Activated CD8-positive, alpha-beta T cell treated with anti-CD3 and anti-CD28 coated beads for 36 hours (primary cell): ENCODE measurements at regions of chr10 and their contacts with region 1.

Region 1: GRCh38 chr10:90879062-90879461 is 7.3 kb downstream of the RPP30 start:
- DNase-seq: no peak
- ATAC-seq: no peak
- H3K4me3 Mint-ChIP-seq: no peak overlapping the region
- H3K27ac Mint-ChIP-seq: no peak overlapping the region
- H3K4me1 Mint-ChIP-seq: peaks cover 6% of the 10 kb centered on the region
- H3K27me3 Mint-ChIP-seq: no peaks in the 10 kb centered on the region
- CTCF ChIP-seq: no peak

Region 2: DNA sequence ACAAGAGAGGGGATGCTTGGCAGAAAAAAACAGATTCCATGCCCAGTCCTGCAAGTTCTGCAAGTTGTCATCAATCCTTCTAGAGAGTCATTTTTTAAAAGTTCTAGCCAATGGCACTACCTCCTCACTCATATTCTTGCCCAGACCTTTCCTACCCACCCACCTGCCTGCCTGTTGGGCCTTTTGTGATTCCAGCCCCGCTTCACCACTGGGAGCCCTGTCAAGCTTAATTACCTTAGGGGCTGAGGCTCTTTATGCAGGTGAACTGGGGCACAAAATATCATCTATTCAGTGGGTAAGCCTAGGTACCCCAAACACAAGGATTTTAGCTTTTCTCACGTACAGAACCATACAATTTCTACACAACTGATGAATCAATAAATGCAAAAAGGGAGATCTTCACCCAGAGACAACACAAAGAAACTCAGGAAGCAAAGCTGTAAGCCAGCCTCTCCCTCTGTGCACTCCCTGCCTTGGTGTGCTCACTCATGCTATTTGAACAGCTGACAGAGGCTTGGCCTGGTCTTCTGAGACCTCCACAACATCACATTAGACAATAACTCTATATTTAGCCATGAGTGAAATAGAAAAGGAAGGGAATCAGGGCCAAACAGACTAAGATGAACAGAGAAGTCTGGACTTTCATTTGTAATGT is 243.8 kb before region 1 on chr10:
- CTCF ChIA-PET with region 1: no interaction called
- POLR2A ChIA-PET with region 1: no interaction called
- intact Hi-C with region 1: no loop called
- DNase-seq: no peak
- ATAC-seq: no peak
- H3K4me3 Mint-ChIP-seq: no peak overlapping the region
- H3K27ac Mint-ChIP-seq: no peak overlapping the region
- H3K4me1 Mint-ChIP-seq: no peaks in the 10 kb centered on the region
- H3K27me3 Mint-ChIP-seq: no peaks in the 10 kb centered on the region
- CTCF ChIP-seq: no peak

Region 3: GRCh38 chr10:90893190-90893589 is 14.1 kb after region 1 on chr10:
- CTCF ChIA-PET with region 1: interaction called, 15 read pairs
- POLR2A ChIA-PET with region 1: interaction called, 3 read pairs
- intact Hi-C with region 1: no loop called
- DNase-seq: no peak
- ATAC-seq: no peak
- H3K4me3 Mint-ChIP-seq: no peak overlapping the region
- H3K27ac Mint-ChIP-seq: no peak overlapping the region
- H3K4me1 Mint-ChIP-seq: peaks cover 15% of the 10 kb centered on the region
- H3K27me3 Mint-ChIP-seq: no peaks in the 10 kb centered on the region
- CTCF ChIP-seq: no peak

Region 4: DNA sequence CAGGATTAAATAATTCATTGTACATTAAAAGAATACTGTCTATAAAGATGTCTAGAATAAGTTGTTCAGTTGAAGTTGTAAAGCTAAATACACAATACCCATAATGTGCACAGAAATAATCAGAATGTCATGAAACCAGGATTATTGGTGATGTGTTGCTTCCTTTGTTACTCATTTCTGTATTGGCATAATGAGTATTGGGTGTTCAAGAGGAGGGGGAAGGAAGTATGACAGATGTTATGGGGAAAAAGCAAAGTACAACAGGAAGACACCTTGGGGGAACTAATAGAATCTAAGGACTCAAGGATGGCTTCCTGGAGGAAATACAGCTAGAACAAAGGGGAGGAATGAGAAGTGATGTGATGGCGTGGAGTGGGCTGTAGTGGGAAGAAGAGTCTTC is 26.9 kb after region 1 on chr10:
- CTCF ChIA-PET with region 1: interaction called, 16 read pairs
- POLR2A ChIA-PET with region 1: no interaction called
- intact Hi-C with region 1: no loop called
- DNase-seq: no peak
- ATAC-seq: peak; percentile 45
- H3K4me3 Mint-ChIP-seq: no peak overlapping the region
- H3K27ac Mint-ChIP-seq: peak overlapping the region; percentile 43
- H3K4me1 Mint-ChIP-seq: peaks cover 14% of the 10 kb centered on the region
- H3K27me3 Mint-ChIP-seq: no peaks in the 10 kb centered on the region
- CTCF ChIP-seq: no peak